AG04449 (cell line): ENCODE measurements at regions of chrX and their contacts with region 1.

Region 1: GRCh38 chrX:78708262-78708661 is 39.3 kb upstream of the LPAR4 start:
- DNase-seq: no peak
- H3K4me3 ChIP-seq: no peak overlapping the region
- CTCF ChIP-seq: peak; percentile 67

Region 2: GRCh38 chrX:78555401-78555980 is 152.8 kb before region 1 on chrX:
- CTCF ChIA-PET with region 1: interaction called, 36 read pairs
- POLR2A ChIA-PET with region 1: no interaction called
- DNase-seq: no peak
- H3K4me3 ChIP-seq: no peak overlapping the region
- CTCF ChIP-seq: no peak

Region 3: DNA sequence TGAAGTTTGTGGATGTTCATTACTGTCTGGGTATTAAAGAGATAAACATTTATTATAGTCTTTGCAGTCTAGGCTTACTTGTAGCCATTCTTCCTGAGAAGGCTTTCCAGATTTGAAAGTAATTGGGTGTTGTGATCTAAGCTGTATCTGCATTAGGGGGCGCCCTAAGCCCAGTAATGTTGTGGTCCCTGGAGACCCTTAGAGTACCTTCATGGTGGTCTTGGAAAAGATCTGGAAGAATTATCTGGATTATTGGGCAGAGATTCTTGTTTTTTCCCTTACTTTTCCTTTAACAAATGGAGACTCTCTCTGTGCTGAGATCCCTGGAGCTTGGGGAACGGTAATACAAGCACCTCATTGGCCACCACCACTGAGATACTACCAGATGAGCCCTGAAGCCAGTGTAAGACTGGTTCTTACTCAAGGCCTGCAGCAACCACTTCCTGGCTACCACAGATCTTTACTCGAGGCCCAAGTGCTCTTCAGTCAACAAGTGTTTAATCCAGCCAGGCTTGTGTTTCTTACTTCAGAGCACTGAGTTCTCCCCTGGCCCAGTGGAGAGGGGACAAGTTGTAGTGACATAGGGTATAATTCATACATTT is 112.3 kb before region 1 on chrX:
- CTCF ChIA-PET with region 1: interaction called, 18 read pairs
- POLR2A ChIA-PET with region 1: no interaction called
- DNase-seq: no peak
- H3K4me3 ChIP-seq: no peak overlapping the region
- CTCF ChIP-seq: peak; percentile 7